HCT116 (cell line): ENCODE measurements at regions of chr19 and their contacts with region 1.

Region 1: GRCh38 chr19:46990991-46991676 is 28.5 kb upstream of the NPAS1 start:
- DNase-seq: peak; percentile 48
- ATAC-seq: peak; percentile 89
- H3K4me3 ChIP-seq: no peak overlapping the region
- H3K27ac ChIP-seq: no peak overlapping the region
- H3K4me1 ChIP-seq: peaks cover 0 to 3% of the 10 kb centered on the region in 2 experiments; a peak in 1 of 4 replicates
- H3K27me3 ChIP-seq: no peaks in the 10 kb centered on the region
- CTCF ChIP-seq: peak; percentile 87 to 94 (median 92)
- POLR2A ChIP-seq: no peak
- RAD21 ChIP-seq: peak; percentile 98

Region 2: GRCh38 chr19:46753420-46754155 is 237.5 kb before region 1 on chr19:
- CTCF ChIA-PET with region 1: interaction called, 3 read pairs
- POLR2A ChIA-PET with region 1: no interaction called
- RAD21 ChIA-PET with region 1: no interaction called
- intact Hi-C with region 1: loop called (anchors 1 kb)
- DNase-seq: no peak
- ATAC-seq: peak; percentile 72
- H3K4me3 ChIP-seq: no peak overlapping the region
- H3K27ac ChIP-seq: no peak overlapping the region
- H3K4me1 ChIP-seq: peaks cover 0 to 8% of the 10 kb centered on the region in 2 experiments; a peak in 3 of 4 replicates
- H3K27me3 ChIP-seq: no peaks in the 10 kb centered on the region
- CTCF ChIP-seq: peak; percentile 54 to 80 (median 75); a peak in 5 of 6 replicates
- POLR2A ChIP-seq: no peak
- RAD21 ChIP-seq: peak; percentile 53

Region 3: DNA sequence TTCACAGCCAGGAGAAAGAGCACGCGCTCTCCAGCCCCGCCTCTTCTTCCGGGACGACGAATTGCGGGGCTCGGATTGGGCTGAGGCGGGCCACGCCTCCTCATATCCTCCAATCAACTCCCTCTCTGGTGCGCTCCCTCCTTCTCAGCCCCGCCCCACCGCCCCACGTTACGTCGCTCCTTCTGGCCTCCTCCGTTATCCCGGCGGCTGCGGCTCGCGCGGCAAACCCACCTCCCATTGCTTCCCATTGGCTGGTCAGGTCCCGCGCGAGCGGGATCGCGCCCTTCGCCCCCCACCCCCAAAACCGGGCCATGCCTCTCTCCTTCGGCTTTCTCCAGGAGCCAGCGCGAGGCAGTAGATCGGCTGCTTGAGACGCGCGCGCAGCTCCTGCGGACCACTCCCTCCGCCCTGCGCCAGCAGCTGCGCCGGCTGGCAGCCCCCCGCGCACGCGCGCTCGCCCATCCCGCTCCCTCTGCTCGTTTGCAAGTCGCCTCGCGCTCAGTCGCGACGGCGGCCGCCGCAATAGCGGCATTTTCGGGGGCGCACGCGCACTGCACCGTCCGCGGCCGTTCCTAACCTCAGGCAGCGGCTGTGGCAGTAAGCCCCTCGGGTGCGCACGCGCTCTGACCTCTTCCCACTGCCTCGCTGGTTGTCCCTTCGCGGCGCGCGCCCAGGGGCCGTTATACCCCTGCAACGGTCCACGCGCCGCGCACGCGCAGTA is 130.8 kb before region 1 on chr19:
- CTCF ChIA-PET with region 1: interaction called, 6 read pairs
- POLR2A ChIA-PET with region 1: interaction called, 5 read pairs
- RAD21 ChIA-PET with region 1: no interaction called
- intact Hi-C with region 1: loop called (anchors 1 kb)
- DNase-seq: peak; percentile 93
- ATAC-seq: peak; percentile 82
- H3K4me3 ChIP-seq: peak overlapping the region; percentile 54 to 64
- H3K27ac ChIP-seq: peak overlapping the region; percentile 99
- H3K4me1 ChIP-seq: peaks cover 31 to 55% of the 10 kb centered on the region in 2 experiments
- H3K27me3 ChIP-seq: no peaks in the 10 kb centered on the region
- CTCF ChIP-seq: no peak
- POLR2A ChIP-seq: peak; percentile 51
- RAD21 ChIP-seq: no peak